GM12878 (cell line): ENCODE measurements at regions of chr20 and their contacts with region 1.

Region 1: DNA sequence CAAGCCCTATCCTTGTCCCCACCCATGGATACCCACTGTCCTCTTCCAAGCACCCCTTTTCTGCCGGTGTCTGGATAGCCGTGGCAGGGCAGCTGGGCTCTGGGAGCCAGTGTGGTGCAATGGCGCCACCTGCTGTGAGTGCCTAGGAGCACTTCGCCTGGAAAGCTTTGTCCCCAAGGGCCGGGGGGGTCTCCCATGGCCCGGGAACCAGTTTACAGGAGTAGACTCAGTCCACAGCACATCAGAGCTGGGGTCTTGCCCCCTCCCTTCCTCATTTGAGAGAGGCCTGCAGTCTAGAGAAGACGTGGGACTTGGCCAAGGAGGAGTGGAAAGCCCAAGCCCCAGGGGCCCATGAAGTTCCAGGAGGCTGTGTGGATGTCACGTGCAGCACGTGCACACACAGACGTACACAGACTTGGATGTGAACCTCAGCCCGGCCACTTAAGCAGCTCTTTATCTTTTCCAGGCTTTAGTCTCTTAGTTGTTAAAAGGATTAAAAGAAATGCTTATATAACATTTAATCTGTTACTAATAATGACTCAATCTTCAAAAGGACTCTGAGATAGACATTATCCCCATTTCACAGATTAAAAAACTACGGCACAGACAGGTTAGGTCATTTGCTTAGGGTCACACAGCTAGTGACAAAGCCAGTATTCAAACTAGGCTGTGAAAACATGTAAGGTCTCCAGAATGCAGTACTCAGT is 40.9 kb upstream of the CDH22 start:
- DNase-seq: no peak
- ATAC-seq: peak; percentile 28
- H3K4me3 ChIP-seq: peak overlapping the region; percentile 48; the same call in 1 of the 2 replicates
- H3K27ac ChIP-seq: peak overlapping the region; percentile 91
- H3K4me1 ChIP-seq: peaks cover 33% of the 10 kb centered on the region
- H3K27me3 ChIP-seq: no peaks in the 10 kb centered on the region
- CTCF ChIP-seq: peak; percentile 74 to 83 (median 82)
- EP300 ChIP-seq: no peak
- POLR2A ChIP-seq: peak; percentile 18; the same call in 1 of the 2 replicates
- RAD21 ChIP-seq: peak; percentile 67

Region 2: GRCh38 chr20:46307139-46307998 is 41.8 kb before region 1 on chr20:
- CTCF ChIA-PET with region 1: interaction called, 56 read pairs
- POLR2A ChIA-PET with region 1: no interaction called
- RAD21 ChIA-PET with region 1: interaction called, 11 read pairs
- SMC1A ChIA-PET with region 1: interaction called, 14 read pairs
- in situ Hi-C with region 1: no loop called
- intact Hi-C with region 1: loop called (anchors 1 kb)
- DNase-seq: no peak
- ATAC-seq: peak; percentile 96
- H3K4me3 ChIP-seq: no peak overlapping the region; the same call in 1 of the 2 replicates
- H3K27ac ChIP-seq: no peak overlapping the region
- H3K4me1 ChIP-seq: no peaks in the 10 kb centered on the region
- H3K27me3 ChIP-seq: peaks cover 7 to 21% of the 10 kb centered on the region in 2 experiments
- CTCF ChIP-seq: peak; percentile 87 to 95 (median 91)
- EP300 ChIP-seq: no peak
- POLR2A ChIP-seq: no peak
- RAD21 ChIP-seq: peak; percentile 86

Region 3: GRCh38 chr20:46324960-46325703 is 24.1 kb before region 1 on chr20:
- CTCF ChIA-PET with region 1: interaction called, 14 read pairs
- POLR2A ChIA-PET with region 1: no interaction called
- RAD21 ChIA-PET with region 1: interaction called, 3 read pairs
- SMC1A ChIA-PET with region 1: no interaction called
- in situ Hi-C with region 1: no loop called
- intact Hi-C with region 1: no loop called
- DNase-seq: no peak
- ATAC-seq: peak; percentile 68
- H3K4me3 ChIP-seq: no peak overlapping the region
- H3K27ac ChIP-seq: no peak overlapping the region
- H3K4me1 ChIP-seq: no peaks in the 10 kb centered on the region
- H3K27me3 ChIP-seq: peaks cover 0 to 4% of the 10 kb centered on the region in 2 experiments; a peak in 3 of 4 replicates
- CTCF ChIP-seq: peak in 2 of 3 experiments; percentile 30 to 33; a peak in 3 of 6 replicates
- EP300 ChIP-seq: no peak
- POLR2A ChIP-seq: no peak
- RAD21 ChIP-seq: no peak

Region 4: DNA sequence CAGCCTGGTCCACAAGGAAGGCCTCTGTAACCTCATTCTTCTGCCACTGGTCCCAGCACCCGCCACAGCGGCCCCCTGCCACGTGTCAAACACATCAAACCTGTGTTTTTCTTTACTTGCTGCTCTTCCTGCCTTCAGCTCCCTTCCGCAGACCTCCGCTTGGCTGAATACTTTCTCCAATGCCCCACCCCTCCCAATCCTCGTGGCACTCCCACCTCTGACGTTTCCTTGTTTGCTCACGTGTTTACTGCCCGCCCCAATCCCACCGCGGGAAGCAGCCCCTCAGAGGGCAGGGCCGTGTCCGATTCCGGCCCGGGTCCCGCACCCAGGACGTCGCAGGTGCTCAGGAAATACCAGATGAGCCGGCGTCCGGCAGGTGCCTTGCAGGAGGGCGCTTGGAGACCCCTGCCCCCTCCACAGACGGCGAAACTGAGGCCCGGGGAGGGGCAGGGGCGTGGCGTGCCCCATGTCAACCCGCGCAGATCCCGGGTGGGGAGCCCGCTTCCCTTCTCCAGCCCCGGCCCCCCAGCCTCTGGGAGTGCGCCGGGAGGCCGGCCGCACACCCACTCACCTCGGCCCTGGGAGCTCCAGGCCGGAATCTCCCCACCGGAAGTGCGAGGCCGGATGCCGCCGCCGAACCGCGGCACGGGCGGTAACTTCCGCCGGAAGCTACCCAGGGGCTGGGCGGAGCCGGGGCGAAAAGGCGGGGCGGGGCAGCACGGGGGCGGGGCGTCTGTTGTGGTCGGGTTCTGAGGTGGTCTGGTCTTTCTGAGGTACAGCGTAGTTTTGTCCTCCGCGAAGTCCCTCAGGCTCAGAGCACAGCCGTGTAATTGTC is 14.8 kb after region 1 on chr20:
- CTCF ChIA-PET with region 1: interaction called, 17 read pairs
- POLR2A ChIA-PET with region 1: interaction called, 14 read pairs
- RAD21 ChIA-PET with region 1: interaction called, 12 read pairs
- SMC1A ChIA-PET with region 1: interaction called, 10 read pairs
- in situ Hi-C with region 1: no loop called
- intact Hi-C with region 1: loop called (anchors 1 kb)
- DNase-seq: peak; percentile 39
- ATAC-seq: peak; percentile 90
- H3K4me3 ChIP-seq: peak overlapping the region; percentile 67
- H3K27ac ChIP-seq: peak overlapping the region; percentile 96
- H3K4me1 ChIP-seq: peaks cover 27% of the 10 kb centered on the region
- H3K27me3 ChIP-seq: no peaks in the 10 kb centered on the region
- CTCF ChIP-seq: no peak
- EP300 ChIP-seq: no peak
- POLR2A ChIP-seq: peak; percentile 95
- RAD21 ChIP-seq: no peak

Region 5: DNA sequence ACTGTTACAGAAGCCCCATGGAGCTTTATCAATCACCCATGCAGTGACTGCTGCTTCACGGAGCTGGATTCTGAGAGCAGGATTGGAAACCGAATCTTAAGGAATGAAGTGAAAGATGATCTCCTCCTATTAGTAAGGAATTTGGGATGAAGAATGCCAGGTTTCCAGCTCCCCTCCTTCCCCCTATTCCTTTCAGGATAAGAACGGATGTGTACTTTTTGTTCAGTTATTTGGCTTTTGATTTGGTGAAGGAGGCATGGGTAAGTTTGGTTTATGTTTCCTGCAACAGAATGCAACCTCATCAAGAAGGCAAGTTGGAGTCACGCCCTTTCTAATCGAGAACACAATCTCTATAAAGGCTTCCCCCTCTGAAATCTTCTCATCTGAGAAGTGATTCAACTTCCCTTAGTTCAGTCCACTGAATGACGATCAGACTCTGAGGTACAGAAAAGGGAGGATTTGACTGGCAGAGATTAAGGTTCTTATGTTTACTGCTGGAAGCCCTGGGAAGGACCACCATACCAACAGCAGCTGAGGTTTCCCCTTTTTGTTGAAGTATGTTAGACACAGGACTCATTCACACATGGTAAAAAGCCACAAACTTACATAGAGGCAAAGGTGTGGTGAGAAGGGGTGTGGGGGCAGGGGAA is 51.8 kb after region 1 on chr20:
- CTCF ChIA-PET with region 1: interaction called, 10 read pairs
- POLR2A ChIA-PET with region 1: interaction called, 24 read pairs
- RAD21 ChIA-PET with region 1: interaction called, 3 read pairs
- SMC1A ChIA-PET with region 1: interaction called, 7 read pairs
- in situ Hi-C with region 1: no loop called
- intact Hi-C with region 1: no loop called
- DNase-seq: no peak
- ATAC-seq: peak; percentile 14
- H3K4me3 ChIP-seq: peak overlapping the region; percentile 26; the same call in 1 of the 2 replicates
- H3K27ac ChIP-seq: peak overlapping the region; percentile 22
- H3K4me1 ChIP-seq: peaks cover 50% of the 10 kb centered on the region
- H3K27me3 ChIP-seq: no peaks in the 10 kb centered on the region
- CTCF ChIP-seq: no peak
- EP300 ChIP-seq: no peak
- POLR2A ChIP-seq: no peak
- RAD21 ChIP-seq: no peak

Region 6: GRCh38 chr20:46406199-46406985 is 57.2 kb after region 1 on chr20 and contains the start of gene ELMO2:
- CTCF ChIA-PET with region 1: interaction called, 10 read pairs
- POLR2A ChIA-PET with region 1: interaction called, 24 read pairs
- RAD21 ChIA-PET with region 1: interaction called, 15 read pairs
- SMC1A ChIA-PET with region 1: interaction called, 7 read pairs
- in situ Hi-C with region 1: no loop called
- intact Hi-C with region 1: no loop called
- DNase-seq: peak; percentile 76
- ATAC-seq: peak; percentile 91
- H3K4me3 ChIP-seq: peak within 1 kb of the TSS; percentile 82
- H3K27ac ChIP-seq: peak within 1 kb of the TSS; percentile 68
- H3K4me1 ChIP-seq: peaks cover 43% of the 10 kb centered on the region
- H3K27me3 ChIP-seq: no peaks in the 10 kb centered on the region
- CTCF ChIP-seq: no peak
- EP300 ChIP-seq: no peak
- POLR2A ChIP-seq: peak; percentile 65; the same call in 1 of the 2 replicates
- RAD21 ChIP-seq: no peak
- polyA plus RNA-seq, gene ELMO2: 14.2 to 14.8 TPM

Region 7: GRCh38 chr20:46411637-46412036 is 62.4 kb after region 1 on chr20:
- CTCF ChIA-PET with region 1: interaction called, 5 read pairs
- POLR2A ChIA-PET with region 1: interaction called, 24 read pairs
- RAD21 ChIA-PET with region 1: interaction called, 15 read pairs
- SMC1A ChIA-PET with region 1: interaction called, 3 read pairs
- in situ Hi-C with region 1: no loop called
- intact Hi-C with region 1: no loop called
- DNase-seq: no peak
- ATAC-seq: no peak
- H3K4me3 ChIP-seq: no peak overlapping the region
- H3K27ac ChIP-seq: no peak overlapping the region
- H3K4me1 ChIP-seq: peaks cover 10% of the 10 kb centered on the region
- H3K27me3 ChIP-seq: peaks cover 0 to 1% of the 10 kb centered on the region in 2 experiments; a peak in 2 of 4 replicates
- CTCF ChIP-seq: no peak
- EP300 ChIP-seq: no peak
- POLR2A ChIP-seq: no peak
- RAD21 ChIP-seq: no peak